Activated B cell treated with CpG ODN at 0.5 μM for 24 hours (primary cell): ENCODE measurements at regions of chr22 and their contacts with region 1.

Region 1: DNA sequence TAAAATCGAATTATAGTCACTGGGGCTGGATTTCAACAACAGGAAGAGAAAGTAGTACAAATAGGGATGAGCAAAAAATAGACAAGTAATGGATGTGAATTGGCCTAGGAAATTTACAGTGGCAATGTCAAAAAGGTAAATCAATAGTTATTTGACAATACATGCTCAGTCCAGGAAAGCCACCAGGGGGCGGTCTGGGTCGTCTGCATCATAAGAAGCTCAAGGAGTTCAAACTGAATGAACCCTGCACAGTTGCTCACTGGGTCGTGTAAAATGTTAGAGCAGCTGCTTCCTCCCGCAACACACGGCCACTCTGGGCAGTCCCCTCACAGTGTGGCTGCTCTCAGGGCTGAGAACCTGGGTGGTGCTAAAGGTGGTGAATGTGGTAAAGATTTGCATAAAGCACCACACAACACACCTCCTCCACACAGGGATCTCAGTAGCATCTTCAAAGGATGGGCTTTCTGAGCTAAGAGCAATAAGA is 85.9 kb downstream of the ZNF280B start:
- DNase-seq: peak; percentile 79
- ATAC-seq: peak; percentile 99
- H3K4me3 Mint-ChIP-seq: peak overlapping the region; percentile 62
- H3K27ac Mint-ChIP-seq: peak overlapping the region; percentile 70
- H3K4me1 Mint-ChIP-seq: peaks cover 76% of the 10 kb centered on the region
- H3K27me3 Mint-ChIP-seq: no peaks in the 10 kb centered on the region
- CTCF ChIP-seq: peak; percentile 62

Region 2: DNA sequence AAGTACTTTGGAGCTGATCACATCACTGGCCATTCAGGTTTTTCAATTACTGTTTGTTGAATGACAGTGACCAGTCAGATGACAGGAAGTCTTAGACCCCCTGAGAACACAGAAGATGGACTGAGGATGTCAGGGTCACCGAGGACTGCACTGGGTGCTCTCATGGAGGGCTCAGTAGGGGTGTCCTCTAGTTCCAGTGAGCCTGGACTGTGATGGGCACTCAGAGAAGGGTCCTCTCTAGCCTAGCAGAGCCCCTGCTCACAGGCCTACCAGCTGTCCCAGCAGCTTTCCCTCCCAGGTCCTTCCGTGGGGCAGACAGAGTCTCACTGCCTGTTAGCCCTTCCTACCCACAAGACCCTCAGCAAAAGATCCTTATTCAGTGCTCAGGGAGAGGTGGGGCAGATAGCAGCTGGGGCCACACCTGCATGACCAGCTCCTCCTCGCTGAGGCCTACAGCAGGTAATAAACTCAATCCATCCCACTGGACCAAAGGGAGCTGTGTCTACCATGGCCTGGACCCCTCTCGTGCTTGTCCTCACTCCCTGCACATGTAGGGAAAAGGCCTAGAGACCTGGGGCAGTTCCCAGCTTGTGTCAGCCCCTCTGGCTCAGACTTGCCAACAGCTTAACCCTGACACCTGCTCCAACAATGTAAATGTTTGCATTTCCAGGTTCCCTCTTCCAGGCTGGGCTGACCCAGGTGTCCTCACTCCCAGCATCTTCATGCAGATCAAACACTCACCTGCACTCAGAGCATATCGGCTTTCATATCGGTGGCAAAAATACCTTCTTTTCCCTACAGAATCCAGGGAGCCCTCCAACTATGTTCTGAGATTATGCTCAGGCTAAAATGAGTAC is 203.3 kb before region 1 on chr22:
- CTCF ChIA-PET with region 1: no interaction called
- POLR2A ChIA-PET with region 1: no interaction called
- intact Hi-C with region 1: no loop called
- DNase-seq: no peak
- ATAC-seq: no peak
- H3K4me3 Mint-ChIP-seq: no peak overlapping the region
- H3K27ac Mint-ChIP-seq: no peak overlapping the region
- H3K4me1 Mint-ChIP-seq: peaks cover 42% of the 10 kb centered on the region
- H3K27me3 Mint-ChIP-seq: no peaks in the 10 kb centered on the region
- CTCF ChIP-seq: no peak

Region 3: GRCh38 chr22:22380098-22381030 is 42.3 kb before region 1 on chr22:
- CTCF ChIA-PET with region 1: interaction called, 10 read pairs
- POLR2A ChIA-PET with region 1: interaction called, 3 read pairs
- intact Hi-C with region 1: loop called (anchors 1 kb)
- DNase-seq: peak; percentile 46
- ATAC-seq: peak; percentile 80
- H3K4me3 Mint-ChIP-seq: peak overlapping the region; percentile 61
- H3K27ac Mint-ChIP-seq: peak overlapping the region; percentile 86
- H3K4me1 Mint-ChIP-seq: peaks cover 79% of the 10 kb centered on the region
- H3K27me3 Mint-ChIP-seq: no peaks in the 10 kb centered on the region
- CTCF ChIP-seq: no peak

Region 4: DNA sequence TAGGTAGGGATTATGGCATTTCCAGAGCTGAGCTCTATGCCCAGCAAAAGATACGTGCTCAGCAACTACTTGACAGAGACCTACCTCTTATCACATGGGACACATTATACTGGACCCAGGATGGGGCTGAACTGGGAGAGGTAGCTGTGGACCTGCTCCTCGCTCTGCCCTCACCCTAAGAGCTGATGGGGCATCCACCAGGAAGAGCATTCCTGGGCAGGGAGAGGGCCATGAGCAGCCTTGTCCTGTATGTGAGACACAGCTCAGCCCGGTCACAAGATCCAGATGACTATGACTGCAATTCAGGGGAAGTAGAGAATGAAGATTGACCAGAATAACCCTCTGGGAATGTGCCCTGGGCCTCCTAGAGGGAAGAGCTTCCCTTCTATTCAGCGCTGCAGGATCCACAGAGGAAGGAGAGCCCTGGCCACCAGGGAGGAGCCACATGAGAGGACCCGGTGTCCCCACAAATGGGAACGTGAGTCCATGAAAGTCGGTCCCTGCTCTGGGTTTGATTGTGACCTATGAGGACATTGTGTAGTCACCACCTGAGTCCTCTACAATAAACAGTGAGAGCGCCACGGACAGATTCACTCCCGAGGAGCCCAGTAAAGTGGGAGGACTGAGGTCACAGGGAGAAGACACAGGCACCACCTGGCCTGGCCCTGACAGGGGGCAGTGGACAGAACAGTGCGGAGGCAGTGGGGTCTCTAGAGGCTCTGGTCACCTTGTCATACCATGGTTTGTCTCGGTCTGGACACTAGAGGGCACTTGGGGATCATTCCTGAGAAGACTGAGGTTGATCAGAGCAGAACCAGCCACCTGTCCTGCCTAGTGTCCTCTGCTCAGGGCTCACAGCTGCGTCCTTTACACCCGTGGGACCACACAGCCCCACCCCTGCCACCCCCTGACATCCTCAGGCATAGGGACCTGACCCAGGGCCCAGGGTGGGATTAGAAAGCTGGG is 13.7 kb before region 1 on chr22:
- CTCF ChIA-PET with region 1: interaction called, 20 read pairs
- POLR2A ChIA-PET with region 1: interaction called, 11 read pairs
- intact Hi-C with region 1: loop called (anchors 1 kb)
- DNase-seq: no peak
- ATAC-seq: peak; percentile 60
- H3K4me3 Mint-ChIP-seq: peak overlapping the region; percentile 19
- H3K27ac Mint-ChIP-seq: no peak overlapping the region
- H3K4me1 Mint-ChIP-seq: peaks cover 61% of the 10 kb centered on the region
- H3K27me3 Mint-ChIP-seq: no peaks in the 10 kb centered on the region
- CTCF ChIP-seq: no peak

Region 5: GRCh38 chr22:22463855-22464540 is 41.3 kb after region 1 on chr22:
- CTCF ChIA-PET with region 1: interaction called, 25 read pairs
- POLR2A ChIA-PET with region 1: interaction called, 3 read pairs
- intact Hi-C with region 1: loop called (anchors 5 kb)
- DNase-seq: no peak
- ATAC-seq: peak; percentile 61
- H3K4me3 Mint-ChIP-seq: peak overlapping the region; percentile 24
- H3K27ac Mint-ChIP-seq: peak overlapping the region; percentile 61
- H3K4me1 Mint-ChIP-seq: peaks cover 19% of the 10 kb centered on the region
- H3K27me3 Mint-ChIP-seq: peaks cover 4% of the 10 kb centered on the region
- CTCF ChIP-seq: peak; percentile 76